PC-9 (cell line): ENCODE measurements at regions of chr11 and their contacts with region 1.

Region 1: GRCh38 chr11:13335319-13335718 is 57.7 kb downstream of the BMAL1 start:
- DNase-seq: peak in 1 of 2 experiments; percentile 38
- H3K4me3 ChIP-seq: no peak overlapping the region
- H3K27ac ChIP-seq: no peak overlapping the region
- H3K4me1 ChIP-seq: peaks cover 62% of the 10 kb centered on the region
- H3K27me3 ChIP-seq: no peaks in the 10 kb centered on the region
- CTCF ChIP-seq: peak; percentile 74

Region 2: GRCh38 chr11:13052130-13052605 is 283.2 kb before region 1 on chr11:
- CTCF ChIA-PET with region 1: no interaction called
- POLR2A ChIA-PET with region 1: interaction called, 4 read pairs
- intact Hi-C with region 1: loop called (anchors 10 kb)
- DNase-seq: peak; percentile 18 to 78
- H3K4me3 ChIP-seq: no peak overlapping the region
- H3K27ac ChIP-seq: 0 out of 2 replicates have a peak overlapping the region, but pooled peaks have one; percentile 11
- H3K4me1 ChIP-seq: peaks cover 31% of the 10 kb centered on the region
- H3K27me3 ChIP-seq: no peaks in the 10 kb centered on the region
- CTCF ChIP-seq: no peak

Region 3: GRCh38 chr11:13216019-13216710 is 119.2 kb before region 1 on chr11:
- CTCF ChIA-PET with region 1: interaction called, 16 read pairs
- POLR2A ChIA-PET with region 1: no interaction called
- intact Hi-C with region 1: loop called (anchors 2 kb)
- DNase-seq: peak; percentile 80 to 89
- H3K4me3 ChIP-seq: peak overlapping the region; percentile 16; the same call in 1 of the 2 replicates
- H3K27ac ChIP-seq: peak overlapping the region; percentile 91
- H3K4me1 ChIP-seq: peaks cover 50% of the 10 kb centered on the region
- H3K27me3 ChIP-seq: no peaks in the 10 kb centered on the region
- CTCF ChIP-seq: no peak

Region 4: GRCh38 chr11:13261591-13262061 is 73.7 kb before region 1 on chr11:
- CTCF ChIA-PET with region 1: no interaction called
- POLR2A ChIA-PET with region 1: no interaction called
- intact Hi-C with region 1: loop called (anchors 1 kb)
- DNase-seq: peak in 1 of 2 experiments; percentile 81
- H3K4me3 ChIP-seq: no peak overlapping the region
- H3K27ac ChIP-seq: peak overlapping the region; percentile 75
- H3K4me1 ChIP-seq: peaks cover 37% of the 10 kb centered on the region
- H3K27me3 ChIP-seq: no peaks in the 10 kb centered on the region
- CTCF ChIP-seq: no peak

Region 5: GRCh38 chr11:13276832-13277767 is 58.2 kb before region 1 on chr11:
- CTCF ChIA-PET with region 1: no interaction called
- POLR2A ChIA-PET with region 1: no interaction called
- intact Hi-C with region 1: loop called (anchors 1 kb)
- DNase-seq: peak; percentile 86 to 96
- H3K4me3 ChIP-seq: peak overlapping the region; percentile 88
- H3K27ac ChIP-seq: no peak overlapping the region
- H3K4me1 ChIP-seq: peaks cover 12% of the 10 kb centered on the region
- H3K27me3 ChIP-seq: peaks cover 6% of the 10 kb centered on the region; the same call in 1 of the 2 replicates
- CTCF ChIP-seq: no peak

Region 6: GRCh38 chr11:13462901-13463778 is 127.8 kb after region 1 on chr11 and contains the start of gene BTBD10:
- CTCF ChIA-PET with region 1: no interaction called
- POLR2A ChIA-PET with region 1: no interaction called
- intact Hi-C with region 1: loop called (anchors 10 kb)
- DNase-seq: peak; percentile 84
- H3K4me3 ChIP-seq: peak within 1 kb of the TSS; percentile 94
- H3K27ac ChIP-seq: peak within 1 kb of the TSS; percentile 68
- H3K4me1 ChIP-seq: peaks cover 20% of the 10 kb centered on the region
- H3K27me3 ChIP-seq: no peaks in the 10 kb centered on the region
- CTCF ChIP-seq: no peak
- total RNA-seq, gene BTBD10: 16.5 and 22.0 TPM in 2 replicates

Region 7: DNA sequence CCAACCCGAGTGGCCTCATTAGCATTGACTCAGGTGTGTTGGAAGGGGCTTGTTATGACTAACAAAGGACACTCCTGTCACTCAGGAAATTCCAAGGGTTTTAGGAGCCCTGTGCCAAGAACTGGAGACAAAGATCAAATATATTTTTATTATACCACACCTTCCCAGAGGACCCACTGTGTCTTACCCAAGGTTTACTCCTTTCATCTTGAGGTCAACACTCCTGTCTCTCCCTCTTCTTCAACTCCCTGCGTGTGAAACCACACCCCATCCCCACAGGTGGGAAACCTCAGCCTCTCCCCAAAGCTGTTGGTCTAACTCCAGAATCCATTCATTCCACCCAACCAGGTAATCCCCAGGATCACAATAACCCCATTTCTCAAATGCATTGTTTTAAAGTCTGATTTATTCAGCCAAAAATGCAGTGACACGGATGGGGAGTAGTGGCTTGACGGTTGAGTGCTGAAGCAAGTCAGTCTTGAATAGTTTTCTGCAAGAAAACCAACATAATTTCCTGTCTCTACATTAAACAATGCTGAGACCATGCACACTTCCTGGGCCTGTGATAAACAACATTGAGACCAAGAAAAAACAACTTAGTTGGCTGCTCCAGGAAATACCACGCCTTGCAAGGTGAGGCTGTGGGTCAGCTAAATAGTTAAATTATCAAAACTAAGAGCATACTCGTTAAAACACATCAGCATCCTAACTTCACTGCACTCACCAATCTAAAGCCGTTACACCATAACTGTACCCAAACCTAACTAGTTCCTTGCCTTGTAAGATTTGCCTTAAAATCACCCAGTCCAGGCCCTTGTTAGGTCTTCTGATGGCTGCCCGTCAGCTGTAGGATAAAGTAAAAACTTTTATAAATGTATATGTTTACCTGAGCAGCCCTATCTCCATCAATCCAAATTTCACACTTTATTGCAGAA is 588.7 kb after region 1 on chr11:
- CTCF ChIA-PET with region 1: no interaction called
- POLR2A ChIA-PET with region 1: no interaction called
- intact Hi-C with region 1: loop called (anchors 5 kb)
- DNase-seq: peak; percentile 60 to 75
- H3K4me3 ChIP-seq: peak overlapping the region; percentile 21; the same call in 1 of the 2 replicates
- H3K27ac ChIP-seq: peak overlapping the region; percentile 76
- H3K4me1 ChIP-seq: peaks cover 46% of the 10 kb centered on the region
- H3K27me3 ChIP-seq: no peaks in the 10 kb centered on the region
- CTCF ChIP-seq: no peak